Activated T-helper 2 cell treated with anti-CD3 and anti-CD28 coated beads, Interferon-gamma antibody, Interleukin-2, Interleukin-4, amounts not matched to agents 10 μg/mL and 5 μg/mL and 100 μg/mL, durations not matched to agents 14 hours and 24 hours and 36 hours (primary cell): ENCODE measurements at regions of chr1 and their contacts with region 1.

Region 1: DNA sequence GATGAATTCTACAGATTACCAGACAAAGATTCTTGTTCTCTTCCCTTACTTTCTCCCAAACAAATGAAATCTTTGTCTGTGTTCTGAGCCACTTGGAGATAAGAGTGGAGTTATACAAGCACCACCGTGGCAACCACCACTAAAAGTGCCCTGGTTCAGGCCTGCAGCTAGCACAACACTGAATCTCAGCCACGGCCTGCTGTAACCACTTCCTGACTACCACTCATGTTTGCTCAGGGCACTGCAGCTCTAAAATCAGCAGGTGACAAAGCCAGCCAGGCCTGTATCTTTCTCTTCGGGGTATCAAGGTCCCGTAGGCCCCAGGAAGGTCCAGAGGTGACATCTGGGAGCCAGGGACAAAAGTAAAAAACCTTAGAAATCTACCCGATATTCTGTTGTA is 3.2 kb upstream of the OR2T6 start:
- DNase-seq: no peak
- H3K4me3 Mint-ChIP-seq: no peak overlapping the region
- H3K27ac Mint-ChIP-seq: no peak overlapping the region
- H3K4me1 Mint-ChIP-seq: no peaks in the 10 kb centered on the region
- H3K27me3 Mint-ChIP-seq: no peaks in the 10 kb centered on the region

Region 2: DNA sequence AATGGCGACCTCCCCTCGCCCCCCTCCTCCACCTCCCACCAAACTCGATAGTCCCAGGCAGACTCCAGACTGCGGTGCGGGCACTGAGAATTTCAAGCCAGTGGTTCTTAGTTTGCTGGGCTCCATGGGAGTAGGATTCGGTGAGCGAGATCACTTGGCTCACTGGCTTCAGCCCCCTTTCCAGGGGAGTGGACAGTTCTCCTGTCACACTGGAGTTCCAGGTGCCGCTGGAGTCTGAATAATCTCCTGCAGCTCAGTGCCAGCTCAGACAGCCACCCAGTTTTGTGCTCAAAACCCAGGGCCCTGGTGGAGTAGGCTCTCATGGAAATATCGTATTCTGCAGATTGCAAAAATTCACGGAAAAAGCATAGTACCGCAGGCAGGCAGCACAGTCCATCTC is 55.6 kb before region 1 on chr1:
- intact Hi-C with region 1: loop called (anchors 10 kb)
- DNase-seq: no peak
- H3K4me3 Mint-ChIP-seq: no peak overlapping the region
- H3K27ac Mint-ChIP-seq: no peak overlapping the region
- H3K4me1 Mint-ChIP-seq: no peaks in the 10 kb centered on the region
- H3K27me3 Mint-ChIP-seq: no peaks in the 10 kb centered on the region